Activated CD4-positive, alpha-beta T cell treated with anti-CD3 and anti-CD28 coated beads, Interleukin-2, amount 10 ng/mL, durations not matched to agents 7 days and 5 days (primary cell): ENCODE measurements at regions of chr3 and their contacts with region 1.

Region 1: DNA sequence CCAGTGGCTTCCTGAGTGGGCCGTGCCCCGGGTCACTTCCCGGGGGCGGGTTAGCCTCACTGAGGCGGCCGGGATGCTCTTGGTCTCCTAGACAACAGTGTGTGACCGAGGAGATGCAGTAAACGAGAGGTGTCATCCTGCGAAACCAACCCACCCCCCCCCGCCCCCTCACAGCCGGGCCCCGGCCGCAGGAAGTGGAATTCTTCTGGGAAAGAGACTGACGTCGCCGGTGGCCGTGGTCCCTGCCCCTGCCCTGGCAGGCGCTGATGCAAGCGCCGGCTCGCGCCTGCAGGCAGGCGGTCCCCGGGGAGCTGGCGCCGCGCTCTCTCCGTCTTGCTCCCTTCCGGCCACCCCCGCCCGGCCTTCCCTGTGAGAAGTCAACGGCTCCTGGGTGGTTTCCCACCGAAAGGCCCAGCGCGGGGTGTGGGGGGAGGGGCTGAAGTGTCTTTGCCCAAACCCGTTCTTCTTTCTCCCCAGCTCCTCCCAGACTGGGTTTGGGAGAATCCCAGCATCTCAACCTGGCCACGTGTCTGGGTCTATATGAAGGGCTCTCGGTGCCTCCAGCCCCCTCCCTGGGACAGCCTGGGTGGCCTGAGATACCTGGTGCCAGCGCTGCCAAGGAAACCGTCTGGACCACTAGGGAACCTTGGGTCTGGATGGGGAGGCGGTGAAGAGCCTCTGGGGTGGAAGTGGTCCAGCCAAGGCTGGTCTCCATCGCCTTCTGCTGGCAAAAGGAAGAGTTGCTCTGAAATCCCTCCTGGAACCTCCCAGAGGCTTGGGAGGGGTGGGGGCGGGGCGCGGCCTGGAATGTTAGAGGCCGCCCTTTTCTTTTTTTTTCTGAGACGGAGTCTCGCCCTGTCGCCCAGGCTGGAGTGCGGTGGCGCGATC is 47.3 kb downstream of the BHLHE40 start:
- DNase-seq: peak; percentile 63
- H3K4me3 Mint-ChIP-seq: peak overlapping the region; percentile 74
- H3K27ac Mint-ChIP-seq: peak overlapping the region; percentile 85
- H3K4me1 Mint-ChIP-seq: peaks cover 42% of the 10 kb centered on the region
- H3K27me3 Mint-ChIP-seq: peaks cover 2% of the 10 kb centered on the region

Region 2: GRCh38 chr3:4469572-4469971 is 557.0 kb before region 1 on chr3:
- CTCF ChIA-PET with region 1: interaction called, 11 read pairs
- POLR2A ChIA-PET with region 1: no interaction called
- DNase-seq: no peak
- H3K4me3 Mint-ChIP-seq: no peak overlapping the region
- H3K27ac Mint-ChIP-seq: no peak overlapping the region
- H3K4me1 Mint-ChIP-seq: peaks cover 26% of the 10 kb centered on the region
- H3K27me3 Mint-ChIP-seq: peaks cover 5% of the 10 kb centered on the region

Region 3: DNA sequence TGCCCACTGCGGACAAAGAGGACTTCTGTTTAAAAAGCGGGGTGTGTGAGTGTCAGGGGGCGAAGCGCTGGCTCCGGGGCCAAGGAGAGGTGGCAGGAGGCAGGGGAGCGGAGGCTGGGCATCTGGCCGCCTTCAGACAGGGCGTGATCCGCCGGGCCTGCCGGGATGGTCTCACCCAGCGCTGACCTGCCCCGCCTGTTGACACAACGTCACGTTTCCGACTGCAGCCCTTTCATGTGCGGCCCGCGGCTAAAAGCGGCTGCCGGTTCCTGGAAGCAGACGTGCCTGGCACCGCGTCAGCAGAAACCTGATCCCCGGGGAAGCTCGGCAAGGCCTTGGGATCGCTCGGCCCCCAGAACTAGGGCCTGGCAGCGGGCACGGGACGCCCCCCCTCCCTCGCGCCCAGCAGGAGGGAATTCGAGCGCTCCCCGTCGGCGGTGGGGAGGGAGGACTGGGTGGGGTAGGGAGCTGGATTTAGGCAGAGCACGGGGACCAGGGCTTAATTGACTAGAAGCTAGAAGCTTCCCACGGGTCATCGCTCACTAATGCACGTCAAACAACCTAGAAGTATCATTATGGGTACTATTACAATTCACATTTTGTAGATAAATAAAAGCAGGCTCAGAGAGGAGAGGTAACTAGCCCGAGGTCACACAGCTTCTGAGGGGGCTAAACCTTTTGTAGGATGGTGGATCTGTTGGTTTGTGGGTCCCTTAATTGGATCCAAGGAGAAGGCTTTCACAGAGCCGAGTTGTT is 39.6 kb before region 1 on chr3:
- CTCF ChIA-PET with region 1: interaction called, 19 read pairs
- POLR2A ChIA-PET with region 1: interaction called, 5 read pairs
- DNase-seq: peak; percentile 80
- H3K4me3 Mint-ChIP-seq: peak overlapping the region; percentile 78
- H3K27ac Mint-ChIP-seq: peak overlapping the region; percentile 87
- H3K4me1 Mint-ChIP-seq: peaks cover 67% of the 10 kb centered on the region
- H3K27me3 Mint-ChIP-seq: no peaks in the 10 kb centered on the region

Region 4: GRCh38 chr3:5136211-5136918 is 109.8 kb after region 1 on chr3:
- CTCF ChIA-PET with region 1: no interaction called
- POLR2A ChIA-PET with region 1: no interaction called
- DNase-seq: peak; percentile 56
- H3K4me3 Mint-ChIP-seq: no peak overlapping the region
- H3K27ac Mint-ChIP-seq: peak overlapping the region; percentile 55
- H3K4me1 Mint-ChIP-seq: peaks cover 44% of the 10 kb centered on the region
- H3K27me3 Mint-ChIP-seq: no peaks in the 10 kb centered on the region